Endothelial cell of umbilical vein (primary cell): ENCODE measurements at regions of chr7 and their contacts with region 1.

Region 1: DNA sequence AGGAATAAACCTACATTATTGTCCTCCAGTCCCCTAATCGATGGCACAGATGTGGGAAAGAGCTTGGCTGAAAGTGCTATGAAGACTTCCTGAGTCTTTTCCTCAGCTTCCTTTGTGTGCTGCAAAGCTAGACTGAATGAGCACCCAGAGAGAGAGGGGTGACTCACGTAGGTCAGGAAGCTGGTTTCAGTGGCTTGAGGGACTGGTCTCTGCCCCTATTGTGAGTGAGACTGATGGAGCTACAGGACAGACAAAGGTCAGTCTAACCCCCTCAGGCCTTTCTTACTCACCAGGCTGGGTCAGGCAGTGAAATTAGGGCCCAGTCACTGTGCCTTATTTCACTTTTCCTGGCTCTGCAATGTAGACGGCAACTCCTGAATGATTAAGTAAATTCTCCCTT is 171.1 kb upstream of the GRB10 start:
- DNase-seq: peak; percentile 81
- H3K4me3 ChIP-seq: no peak overlapping the region
- H3K27ac ChIP-seq: peak overlapping the region; percentile 85
- H3K4me1 ChIP-seq: peaks cover 57% of the 10 kb centered on the region
- H3K27me3 ChIP-seq: no peaks in the 10 kb centered on the region
- CTCF ChIP-seq: no peak
- POLR2A ChIP-seq: peak; percentile 33

Region 2: GRCh38 chr7:50728184-50728583 is 225.6 kb before region 1 on chr7:
- CTCF ChIA-PET with region 1: no interaction called
- POLR2A ChIA-PET with region 1: no interaction called
- dilution Hi-C with region 1: no loop called
- intact Hi-C with region 1: loop called (anchors 5 kb)
- DNase-seq: no peak
- H3K4me3 ChIP-seq: no peak overlapping the region
- H3K27ac ChIP-seq: peak overlapping the region; percentile 29
- H3K4me1 ChIP-seq: peaks cover 57% of the 10 kb centered on the region
- H3K27me3 ChIP-seq: no peaks in the 10 kb centered on the region
- CTCF ChIP-seq: no peak
- POLR2A ChIP-seq: no peak

Region 3: DNA sequence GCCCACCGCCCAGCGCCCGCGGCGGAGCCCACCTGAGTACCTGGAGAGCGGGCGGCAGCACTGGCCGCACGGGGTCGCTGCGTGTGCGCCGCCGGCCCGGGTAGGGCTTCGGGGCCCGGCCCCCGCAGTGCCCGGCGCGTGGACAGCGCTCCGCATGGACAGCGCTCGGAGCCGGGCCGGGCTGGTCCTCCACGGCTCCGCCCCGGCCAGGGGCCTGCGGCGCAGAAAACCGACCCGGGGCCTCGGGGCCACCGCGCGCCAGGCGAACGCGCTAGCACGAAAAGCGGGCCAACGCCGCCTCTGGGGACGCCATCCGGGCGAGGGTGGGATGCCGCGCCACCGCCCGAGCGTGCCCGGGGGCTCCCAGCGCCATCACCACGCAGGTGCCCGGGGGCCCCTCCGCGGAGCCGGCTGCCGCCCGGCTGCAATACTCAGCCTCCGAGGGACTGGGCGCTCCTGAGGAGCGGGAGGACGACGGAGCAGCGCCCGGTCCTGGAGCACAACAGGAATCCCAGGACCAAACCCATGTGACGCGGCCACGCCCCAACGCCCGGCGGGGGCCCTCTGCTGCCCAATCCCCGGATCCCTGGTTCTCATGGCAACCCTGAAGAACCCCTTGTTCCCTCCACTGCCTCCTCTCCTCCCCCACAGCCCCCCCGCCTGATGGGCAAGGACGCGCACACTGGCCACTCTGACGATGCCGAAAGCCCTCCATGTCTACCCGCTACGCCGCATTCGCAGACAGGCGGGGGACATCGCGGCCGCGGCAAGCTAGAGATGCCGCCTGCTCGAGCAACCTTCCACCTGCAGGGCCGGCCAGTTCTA is 171.2 kb before region 1 on chr7 and contains the start of gene GRB10:
- CTCF ChIA-PET with region 1: no interaction called
- POLR2A ChIA-PET with region 1: no interaction called
- dilution Hi-C with region 1: no loop called
- intact Hi-C with region 1: loop called (anchors 2 kb)
- DNase-seq: peak; percentile 35
- H3K4me3 ChIP-seq: peak within 1 kb of the TSS in 2 of 3 experiments; percentile 25 to 41
- H3K27ac ChIP-seq: no peak within 1 kb of the TSS
- H3K4me1 ChIP-seq: peaks cover 4% of the 10 kb centered on the region
- H3K27me3 ChIP-seq: no peaks in the 10 kb centered on the region
- CTCF ChIP-seq: peak; percentile 12 to 32
- POLR2A ChIP-seq: no peak
- total RNA-seq, gene GRB10: 240 and 243 TPM in 2 replicates

Region 4: DNA sequence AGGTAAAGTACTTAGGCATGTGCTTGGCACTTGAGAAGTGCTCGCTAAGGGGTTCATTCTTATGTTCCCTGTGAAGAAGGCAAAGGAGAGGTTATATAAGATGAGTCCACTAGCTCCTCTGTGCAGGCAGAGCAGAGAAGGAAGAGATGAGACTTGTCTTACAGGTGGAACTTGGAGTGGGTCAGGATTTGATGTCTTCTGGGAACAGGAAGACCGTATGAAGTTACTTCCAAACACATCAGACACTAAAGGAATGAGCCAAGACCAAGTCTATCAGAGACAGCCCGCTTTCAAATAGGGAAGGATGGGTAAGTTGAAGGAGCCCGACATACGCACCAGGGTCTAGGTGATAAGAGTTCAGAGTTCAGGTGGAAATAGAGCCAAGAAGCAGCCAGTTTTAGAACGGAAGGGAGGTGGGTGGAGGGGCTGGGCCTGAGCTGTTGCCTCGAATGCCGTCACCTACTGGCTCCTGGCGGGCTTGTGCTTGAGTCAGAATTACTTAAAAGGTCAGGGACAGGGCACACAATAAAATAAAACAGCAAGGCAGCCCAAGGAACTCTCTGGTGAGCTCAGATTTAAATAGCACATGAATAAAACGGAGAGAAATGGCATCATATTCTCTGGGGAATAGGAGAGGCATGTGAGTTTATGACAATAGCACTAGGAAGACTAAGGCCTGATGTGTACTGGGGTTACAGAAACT is 115.0 kb before region 1 on chr7:
- CTCF ChIA-PET with region 1: interaction called, 3 read pairs
- POLR2A ChIA-PET with region 1: no interaction called
- dilution Hi-C with region 1: no loop called
- intact Hi-C with region 1: loop called (anchors 1 kb)
- DNase-seq: peak; percentile 31
- H3K4me3 ChIP-seq: no peak overlapping the region
- H3K27ac ChIP-seq: peak overlapping the region; percentile 92
- H3K4me1 ChIP-seq: peaks cover 23% of the 10 kb centered on the region
- H3K27me3 ChIP-seq: no peaks in the 10 kb centered on the region
- CTCF ChIP-seq: no peak
- POLR2A ChIP-seq: no peak

Region 5: GRCh38 chr7:51019191-51019844 is 65.5 kb after region 1 on chr7:
- CTCF ChIA-PET with region 1: no interaction called
- POLR2A ChIA-PET with region 1: no interaction called
- dilution Hi-C with region 1: no loop called
- intact Hi-C with region 1: no loop called
- DNase-seq: no peak
- H3K4me3 ChIP-seq: no peak overlapping the region
- H3K27ac ChIP-seq: no peak overlapping the region
- H3K4me1 ChIP-seq: no peaks in the 10 kb centered on the region
- H3K27me3 ChIP-seq: no peaks in the 10 kb centered on the region
- CTCF ChIP-seq: no peak
- POLR2A ChIP-seq: no peak

Region 6: GRCh38 chr7:51234139-51234538 is 280.3 kb after region 1 on chr7:
- CTCF ChIA-PET with region 1: no interaction called
- POLR2A ChIA-PET with region 1: no interaction called
- dilution Hi-C with region 1: no loop called
- intact Hi-C with region 1: no loop called
- DNase-seq: no peak
- H3K4me3 ChIP-seq: no peak overlapping the region
- H3K27ac ChIP-seq: no peak overlapping the region
- H3K4me1 ChIP-seq: no peaks in the 10 kb centered on the region
- H3K27me3 ChIP-seq: no peaks in the 10 kb centered on the region
- CTCF ChIP-seq: no peak
- POLR2A ChIP-seq: no peak

Region 7: DNA sequence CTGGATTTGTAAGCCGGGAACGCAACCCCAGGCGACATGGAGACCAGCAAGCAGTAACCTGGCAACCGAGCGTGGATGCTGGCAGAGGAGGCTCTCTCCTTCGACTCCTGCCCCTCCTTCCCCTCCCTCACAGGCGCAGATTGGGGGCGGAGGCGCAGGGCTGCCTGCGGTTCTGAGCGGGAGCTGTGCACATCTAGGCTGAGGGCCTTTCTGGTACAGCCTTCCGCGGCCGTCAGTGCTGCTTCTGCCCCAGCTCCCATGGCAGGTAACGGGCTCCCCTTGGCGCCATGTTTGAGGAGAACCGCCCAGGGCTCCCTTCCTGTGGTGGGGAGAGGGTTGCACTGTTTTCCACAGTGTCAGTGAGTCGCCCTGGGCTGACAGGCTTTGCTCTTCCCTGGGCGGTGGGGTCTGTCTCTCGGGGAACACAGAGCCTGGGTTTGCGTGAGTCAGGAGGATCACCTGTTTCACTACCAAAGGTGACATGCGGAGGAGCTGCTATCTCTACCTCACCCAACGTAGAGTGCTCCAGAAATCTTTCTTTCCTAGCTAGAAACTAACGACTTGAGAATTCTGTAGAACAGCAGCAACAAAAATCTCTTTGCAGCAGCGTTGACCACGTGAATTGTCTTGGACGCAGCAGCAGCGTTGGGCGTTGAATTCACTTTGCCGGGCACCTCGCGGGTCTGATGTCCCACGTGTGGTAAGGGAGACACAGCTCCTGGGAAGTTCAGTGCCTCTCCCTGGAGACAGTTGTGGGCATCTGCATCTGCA is 517.6 kb after region 1 on chr7:
- CTCF ChIA-PET with region 1: no interaction called
- POLR2A ChIA-PET with region 1: no interaction called
- dilution Hi-C with region 1: no loop called
- intact Hi-C with region 1: no loop called
- DNase-seq: no peak
- H3K4me3 ChIP-seq: no peak overlapping the region
- H3K27ac ChIP-seq: no peak overlapping the region
- H3K4me1 ChIP-seq: no peaks in the 10 kb centered on the region
- H3K27me3 ChIP-seq: no peaks in the 10 kb centered on the region
- CTCF ChIP-seq: no peak
- POLR2A ChIP-seq: no peak